Psoas muscle (tissue), 8 donors: ENCODE measurements at regions of chr17 and their contacts with region 1.

Region 1: GRCh38 chr17:4366327-4367063 is at the start of gene UBE2G1:
- DNase-seq: peak; percentile 99
- ATAC-seq: peak; percentile 82 to 90 (median 84)
- H3K4me3 ChIP-seq: peak within 1 kb of the TSS; percentile 100
- H3K27ac ChIP-seq: peak within 1 kb of the TSS; percentile 99
- H3K4me1 ChIP-seq: peaks cover 17% of the 10 kb centered on the region
- H3K27me3 ChIP-seq: no peaks in the 10 kb centered on the region
- CTCF ChIP-seq: peak; percentile 26
- total RNA-seq, gene UBE2G1: 152 to 239 (median 175) TPM

Region 2: DNA sequence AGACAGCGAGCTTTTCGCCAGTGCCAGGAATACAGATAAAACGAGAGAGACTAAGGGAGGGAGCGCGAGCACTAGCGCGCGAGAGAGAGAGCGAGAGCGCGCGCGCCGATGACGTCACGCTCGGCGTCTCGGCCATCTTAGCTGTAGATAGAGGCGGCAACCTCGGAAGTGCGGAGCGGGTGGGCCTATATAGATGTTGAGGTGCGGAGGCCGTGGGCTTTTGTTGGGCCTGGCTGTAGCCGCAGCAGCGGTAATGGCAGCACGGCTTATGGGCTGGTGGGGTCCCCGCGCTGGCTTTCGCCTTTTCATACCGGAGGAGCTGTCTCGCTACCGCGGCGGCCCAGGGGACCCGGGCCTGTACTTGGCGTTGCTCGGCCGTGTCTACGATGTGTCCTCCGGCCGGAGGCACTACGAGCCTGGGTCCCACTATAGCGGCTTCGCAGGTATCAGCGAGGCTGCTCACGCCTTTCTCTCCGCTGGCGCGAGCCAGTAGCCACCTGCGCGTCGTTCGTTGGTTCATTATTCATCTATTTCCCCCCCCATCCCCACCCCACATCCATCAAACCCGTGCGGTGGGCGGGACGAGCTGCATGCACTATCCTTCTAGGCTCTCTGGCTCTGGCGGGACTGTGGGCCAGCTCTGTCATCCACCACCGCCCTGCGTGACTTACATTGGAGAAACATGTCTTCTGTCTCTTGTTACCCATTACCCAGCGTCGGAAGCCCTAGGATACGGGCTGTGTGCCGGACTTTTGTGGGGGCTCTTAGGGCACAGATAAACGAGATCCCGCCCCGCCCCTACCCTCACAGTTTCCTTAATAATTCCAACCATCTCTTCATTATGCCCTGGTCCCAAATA is 222.7 kb before region 1 on chr17:
- intact Hi-C with region 1: loop called in 1 of 2 experiments (anchors 5 kb)
- DNase-seq: peak; percentile 91 to 95
- ATAC-seq: peak; percentile 84 to 89 (median 86)
- H3K4me3 ChIP-seq: peak overlapping the region; percentile 95
- H3K27ac ChIP-seq: peak overlapping the region; percentile 99
- H3K4me1 ChIP-seq: peaks cover 33% of the 10 kb centered on the region
- H3K27me3 ChIP-seq: no peaks in the 10 kb centered on the region
- CTCF ChIP-seq: no peak

Region 3: DNA sequence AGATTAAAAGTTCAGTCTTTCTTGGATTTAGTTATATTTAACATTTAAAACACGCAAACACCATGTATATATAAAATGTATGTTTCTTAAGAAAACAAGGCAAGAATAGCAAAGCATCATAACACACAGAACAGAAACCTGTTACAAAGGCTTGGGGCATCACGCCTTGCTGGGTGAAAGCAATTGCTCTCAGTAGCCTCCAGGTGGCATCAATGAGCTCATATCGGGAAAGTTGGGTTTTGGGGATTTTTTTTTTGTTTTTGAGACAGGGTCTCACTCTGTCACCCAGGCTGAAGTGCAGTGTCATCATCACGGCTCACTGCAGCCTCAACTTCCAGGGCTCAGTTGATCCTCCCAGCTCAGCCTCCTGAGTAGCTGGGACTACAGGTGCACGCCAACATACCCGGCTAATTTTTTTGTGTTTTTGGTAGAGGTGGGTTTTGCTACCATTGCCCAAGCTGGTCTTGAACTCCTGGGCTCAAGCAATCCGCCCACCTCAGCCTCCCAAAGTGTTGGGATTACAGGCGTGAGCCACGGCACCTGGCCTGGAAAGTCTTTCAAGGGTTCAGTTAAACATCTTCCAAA is 166.6 kb before region 1 on chr17:
- intact Hi-C with region 1: loop called in 1 of 2 experiments (anchors 5 kb)
- DNase-seq: no peak
- ATAC-seq: peak in 3 of 4 donors; percentile 32 to 55 (median 39)
- H3K4me3 ChIP-seq: no peak overlapping the region
- H3K27ac ChIP-seq: no peak overlapping the region
- H3K4me1 ChIP-seq: peaks cover 10% of the 10 kb centered on the region
- H3K27me3 ChIP-seq: no peaks in the 10 kb centered on the region
- CTCF ChIP-seq: peak; percentile 74

Region 4: GRCh38 chr17:4249452-4250029 is 117.0 kb before region 1 on chr17:
- intact Hi-C with region 1: no loop called
- DNase-seq: no peak
- ATAC-seq: peak in 3 of 4 donors; percentile 47 to 62 (median 51)
- H3K4me3 ChIP-seq: no peak overlapping the region
- H3K27ac ChIP-seq: peak overlapping the region; percentile 72
- H3K4me1 ChIP-seq: peaks cover 51% of the 10 kb centered on the region
- H3K27me3 ChIP-seq: no peaks in the 10 kb centered on the region
- CTCF ChIP-seq: peak; percentile 51

Region 5: GRCh38 chr17:4318186-4318585 is 48.3 kb before region 1 on chr17:
- intact Hi-C with region 1: loop called in 1 of 2 experiments (anchors 5 kb)
- DNase-seq: no peak
- ATAC-seq: no peak
- H3K4me3 ChIP-seq: peak overlapping the region; percentile 25
- H3K27ac ChIP-seq: peak overlapping the region; percentile 66
- H3K4me1 ChIP-seq: peaks cover 79% of the 10 kb centered on the region
- H3K27me3 ChIP-seq: no peaks in the 10 kb centered on the region
- CTCF ChIP-seq: no peak

Region 6: GRCh38 chr17:4329838-4330237 is 36.7 kb before region 1 on chr17:
- intact Hi-C with region 1: loop called in 1 of 2 experiments (anchors 5 kb)
- DNase-seq: no peak
- ATAC-seq: no peak
- H3K4me3 ChIP-seq: no peak overlapping the region
- H3K27ac ChIP-seq: peak overlapping the region; percentile 87
- H3K4me1 ChIP-seq: peaks cover 84% of the 10 kb centered on the region
- H3K27me3 ChIP-seq: no peaks in the 10 kb centered on the region
- CTCF ChIP-seq: no peak

Region 7: GRCh38 chr17:4728124-4728523 is 361.6 kb after region 1 on chr17:
- intact Hi-C with region 1: no loop called
- DNase-seq: no peak
- ATAC-seq: no peak
- H3K4me3 ChIP-seq: no peak overlapping the region
- H3K27ac ChIP-seq: no peak overlapping the region
- H3K4me1 ChIP-seq: peaks cover 9% of the 10 kb centered on the region
- H3K27me3 ChIP-seq: peaks cover 0 to 2% (median 0%) of the 10 kb centered on the region in 3 donors
- CTCF ChIP-seq: no peak